ENCODE measurements at regions of chr22 and their contacts with region 1.

Region 1: DNA sequence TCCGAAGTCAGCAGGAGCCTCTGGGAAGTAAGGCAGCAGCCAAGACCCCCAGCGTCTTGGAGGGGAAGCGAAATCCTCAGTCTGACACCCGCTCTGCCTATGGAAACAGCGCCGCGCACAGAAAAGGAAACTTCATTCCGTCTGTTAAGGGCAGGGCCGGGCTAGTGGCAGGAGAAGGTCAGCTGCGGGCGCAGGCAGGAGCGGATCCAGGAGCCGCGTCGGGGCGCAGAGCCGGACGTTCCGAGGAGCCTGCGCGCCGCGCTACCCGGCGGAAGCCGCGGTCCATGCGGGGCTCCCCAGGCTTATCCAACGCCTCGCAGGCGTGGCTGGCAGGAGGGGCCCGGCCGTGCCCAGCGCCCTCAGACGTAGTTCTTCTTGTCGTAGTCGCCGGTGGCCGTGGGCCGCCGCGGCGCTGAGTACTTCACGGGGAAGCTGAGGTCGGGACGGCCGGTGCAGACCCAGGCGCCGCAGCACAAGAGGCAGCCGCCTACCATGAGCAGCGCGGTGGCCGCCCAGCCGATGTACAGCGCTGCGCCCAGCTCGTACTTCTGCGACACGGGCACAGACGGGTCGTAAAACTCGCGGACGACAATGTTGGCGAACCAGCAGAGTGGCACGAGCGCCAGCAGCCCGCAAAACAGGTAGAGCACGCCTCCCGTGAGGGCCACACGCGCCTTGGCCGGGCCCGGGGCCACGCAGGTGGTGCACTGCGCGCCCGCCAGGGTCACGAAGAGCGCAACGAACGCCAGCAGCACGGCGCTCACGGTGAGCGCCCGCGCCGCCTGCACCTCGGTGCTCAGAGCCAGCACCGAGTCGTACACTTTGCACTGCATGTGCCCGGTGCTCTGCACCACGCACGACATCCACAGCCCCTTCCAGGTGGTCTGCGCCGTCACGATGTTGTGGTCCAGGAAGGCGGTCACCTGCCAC is 705 bp downstream of the CLDN5 start:
- DNase-seq: peak; percentile 26
- ATAC-seq: peak; percentile 56
- H3K4me3 Mint-ChIP-seq: no peak overlapping the region
- H3K27ac Mint-ChIP-seq: no peak overlapping the region
- H3K4me1 Mint-ChIP-seq: peaks cover 9% of the 10 kb centered on the region
- H3K27me3 Mint-ChIP-seq: peaks cover 22% of the 10 kb centered on the region
- CTCF ChIP-seq: no peak

Region 2: DNA sequence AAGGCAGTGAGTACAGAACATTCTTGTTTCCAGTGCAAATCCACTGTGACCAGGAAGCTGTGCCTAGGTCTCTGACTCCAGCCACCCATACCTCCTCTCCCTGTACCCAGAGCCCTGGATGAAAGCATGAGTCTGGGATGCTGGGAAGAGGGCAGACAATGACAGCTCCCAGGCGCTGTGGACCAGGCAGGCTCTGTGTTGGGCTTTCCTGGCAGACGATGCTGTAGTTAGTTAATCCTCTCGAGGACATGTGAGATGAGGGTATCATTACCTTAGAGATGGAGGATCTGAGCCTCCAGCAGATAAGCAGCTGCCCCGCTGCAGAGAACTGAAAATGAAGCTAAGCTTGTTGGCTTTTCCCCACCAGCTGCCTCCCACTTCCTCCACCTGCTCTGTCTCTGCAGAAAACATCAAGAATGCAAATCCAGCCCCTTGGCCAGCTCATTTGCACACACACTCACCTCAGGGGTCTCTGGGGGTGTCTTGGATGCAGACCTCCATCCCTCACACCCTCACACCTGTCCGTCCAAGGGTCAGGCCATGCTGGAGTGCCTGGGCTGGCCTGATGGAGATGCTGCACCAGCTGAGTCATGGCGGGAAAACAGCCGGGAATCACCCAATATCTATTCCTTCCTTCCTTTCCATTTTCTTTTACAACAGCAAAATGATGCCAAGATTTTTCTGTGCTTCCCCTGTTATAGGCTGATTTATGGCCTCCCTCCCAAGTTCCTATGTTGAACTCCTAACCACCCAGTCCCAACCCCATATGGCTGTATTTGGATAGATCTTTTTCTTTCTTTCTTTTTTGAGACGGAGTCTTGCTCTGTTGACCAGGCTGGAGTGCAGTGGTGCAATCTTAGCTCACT is 95.9 kb after region 1 on chr22:
- CTCF ChIA-PET with region 1: no interaction called
- POLR2A ChIA-PET with region 1: no interaction called
- intact Hi-C with region 1: loop called (anchors 10 kb)
- DNase-seq: no peak
- ATAC-seq: no peak
- H3K4me3 Mint-ChIP-seq: no peak overlapping the region
- H3K27ac Mint-ChIP-seq: no peak overlapping the region
- H3K4me1 Mint-ChIP-seq: peaks cover 12% of the 10 kb centered on the region
- H3K27me3 Mint-ChIP-seq: no peaks in the 10 kb centered on the region
- CTCF ChIP-seq: no peak

Region 3: DNA sequence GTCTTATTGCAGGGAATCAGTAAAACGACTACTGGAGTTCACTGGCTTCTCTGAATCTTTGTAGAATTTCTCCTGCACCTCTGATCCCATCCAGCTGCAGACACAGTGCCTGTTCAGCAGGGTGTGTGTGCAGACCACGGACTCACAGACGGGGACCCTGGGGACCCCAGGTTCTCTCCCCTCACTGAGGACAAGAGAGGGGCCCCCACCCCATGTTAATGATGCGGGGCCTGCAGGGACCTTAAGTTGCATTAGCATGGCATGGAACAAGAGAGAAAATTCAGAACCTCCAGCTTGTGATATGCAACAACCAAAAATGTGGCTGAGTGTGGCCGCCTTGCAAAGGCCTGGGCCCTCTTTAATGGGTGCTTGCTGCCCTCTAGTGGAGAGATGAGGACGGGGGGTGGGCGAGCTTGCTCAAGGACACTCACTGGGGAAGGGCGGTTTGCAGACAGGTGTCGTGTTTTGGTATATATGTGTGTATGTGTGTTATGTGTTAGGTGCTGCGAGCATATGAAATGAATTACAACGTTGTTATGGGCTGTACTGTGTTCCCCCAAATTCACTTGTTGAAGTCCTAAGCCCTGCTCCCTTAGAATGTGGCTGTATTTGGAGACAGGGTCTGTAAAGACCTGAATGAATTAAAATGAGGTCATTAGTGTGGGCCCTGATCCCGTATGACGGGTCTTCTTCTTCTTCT is 106.4 kb after region 1 on chr22:
- CTCF ChIA-PET with region 1: interaction called, 10 read pairs
- POLR2A ChIA-PET with region 1: interaction called, 6 read pairs
- intact Hi-C with region 1: no loop called
- DNase-seq: peak; percentile 92
- ATAC-seq: peak; percentile 94
- H3K4me3 Mint-ChIP-seq: no peak overlapping the region
- H3K27ac Mint-ChIP-seq: no peak overlapping the region
- H3K4me1 Mint-ChIP-seq: no peaks in the 10 kb centered on the region
- H3K27me3 Mint-ChIP-seq: peaks cover 4% of the 10 kb centered on the region
- CTCF ChIP-seq: peak; percentile 91

Measured in activated CD8-positive, alpha-beta T cell treated with anti-CD3 and anti-CD28 coated beads for 36 hours (primary cell).